Breast epithelium (tissue), 4 donors: ENCODE measurements at regions of chr20 and their contacts with region 1.

Region 1: GRCh38 chr20:62782149-62782892 is 14.0 kb upstream of the MRGBP start:
- DNase-seq: no peak
- H3K4me3 ChIP-seq: no peak overlapping the region
- H3K27ac ChIP-seq: no peak overlapping the region
- H3K4me1 ChIP-seq: no peaks in the 10 kb centered on the region
- H3K27me3 ChIP-seq: peaks cover 0 to 24% of the 10 kb centered on the region in 2 donors
- CTCF ChIP-seq: no peak
- POLR2A ChIP-seq: no peak

Region 2: DNA sequence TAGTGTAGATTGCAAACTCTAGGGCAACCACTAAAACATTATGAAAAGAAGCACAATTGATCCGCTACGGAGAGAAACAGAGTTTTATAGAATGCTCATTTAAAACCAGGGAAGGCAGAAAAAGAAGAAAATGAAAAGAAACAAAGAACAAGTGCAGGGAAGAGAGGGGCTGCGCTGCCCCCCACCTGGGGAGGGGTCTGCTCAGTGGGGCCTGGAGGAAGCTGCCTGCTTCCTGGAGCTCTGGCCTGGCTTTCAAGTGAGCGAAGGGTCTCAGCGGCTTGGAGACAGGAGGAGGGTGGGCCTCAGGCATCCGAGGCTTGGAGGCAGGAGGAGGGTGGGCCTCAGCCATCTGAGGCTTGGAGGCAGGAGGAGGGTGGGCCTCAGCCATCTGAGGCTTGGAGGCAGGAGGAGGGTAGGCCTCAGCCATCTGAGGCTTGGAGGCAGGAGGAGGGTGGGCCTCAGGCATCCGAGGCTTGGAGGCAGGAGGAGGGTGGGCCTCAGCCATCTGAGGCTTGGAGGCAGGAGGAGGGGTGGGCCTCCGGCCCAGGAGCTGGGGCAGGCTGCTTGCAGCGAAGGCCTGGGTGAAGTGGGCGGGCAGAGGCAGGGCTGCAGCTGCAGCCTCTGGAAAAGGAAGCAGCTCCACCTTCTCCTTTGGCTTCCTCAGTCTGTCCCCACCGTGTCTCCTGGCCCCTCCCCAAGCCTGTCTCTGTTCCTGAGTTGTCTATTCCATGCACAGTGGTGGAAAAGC is 1122.9 kb before region 1 on chr20:
- intact Hi-C with region 1: no loop called
- DNase-seq: no peak
- H3K4me3 ChIP-seq: no peak overlapping the region
- H3K27ac ChIP-seq: no peak overlapping the region
- H3K4me1 ChIP-seq: no peaks in the 10 kb centered on the region
- H3K27me3 ChIP-seq: no peaks in the 10 kb centered on the region
- CTCF ChIP-seq: no peak
- POLR2A ChIP-seq: no peak

Region 3: GRCh38 chr20:62500237-62500864 is 282.0 kb before region 1 on chr20:
- intact Hi-C with region 1: loop called (anchors 10 kb)
- DNase-seq: peak; percentile 39 to 77
- H3K4me3 ChIP-seq: peak overlapping the region in 1 of 3 donors; percentile 12
- H3K27ac ChIP-seq: no peak overlapping the region
- H3K4me1 ChIP-seq: no peaks in the 10 kb centered on the region
- H3K27me3 ChIP-seq: peaks cover 0 to 22% of the 10 kb centered on the region in 2 donors
- CTCF ChIP-seq: peak; percentile 71 to 93 (median 91)
- POLR2A ChIP-seq: no peak

Region 4: DNA sequence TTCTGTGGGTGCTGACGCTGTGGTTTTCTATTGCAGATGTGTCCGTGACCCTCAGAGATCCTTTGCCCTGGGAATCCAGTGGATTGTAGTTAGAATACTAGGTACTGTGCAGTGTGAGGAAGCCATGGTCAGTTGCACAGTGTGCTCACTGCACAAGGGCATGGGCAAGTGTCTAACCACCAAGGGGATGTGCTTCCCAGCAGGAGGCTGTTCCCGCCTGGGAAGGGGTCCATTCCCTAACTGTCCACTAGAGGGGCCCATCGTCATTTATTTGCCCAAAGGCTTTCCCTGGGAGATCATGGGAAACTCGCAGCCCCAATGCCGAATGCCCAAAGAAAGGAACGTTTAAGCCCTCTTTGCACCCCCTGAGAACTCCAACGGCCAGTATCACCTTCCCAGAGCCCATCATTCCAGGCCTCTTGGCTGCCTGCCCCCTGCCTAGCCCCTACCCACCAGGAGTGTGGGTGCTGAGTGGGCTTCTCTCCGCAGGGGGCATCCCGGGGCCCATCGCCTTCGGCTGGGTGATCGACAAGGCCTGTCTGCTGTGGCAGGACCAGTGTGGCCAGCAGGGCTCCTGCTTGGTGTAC is 113.8 kb before region 1 on chr20:
- intact Hi-C with region 1: loop called (anchors 10 kb)
- DNase-seq: peak; percentile 57 to 64
- H3K4me3 ChIP-seq: no peak overlapping the region
- H3K27ac ChIP-seq: no peak overlapping the region
- H3K4me1 ChIP-seq: peaks cover 0 to 9% of the 10 kb centered on the region in 2 donors
- H3K27me3 ChIP-seq: peaks cover 0 to 5% of the 10 kb centered on the region in 2 donors
- CTCF ChIP-seq: peak; percentile 76 to 85 (median 80)
- POLR2A ChIP-seq: no peak

Region 5: DNA sequence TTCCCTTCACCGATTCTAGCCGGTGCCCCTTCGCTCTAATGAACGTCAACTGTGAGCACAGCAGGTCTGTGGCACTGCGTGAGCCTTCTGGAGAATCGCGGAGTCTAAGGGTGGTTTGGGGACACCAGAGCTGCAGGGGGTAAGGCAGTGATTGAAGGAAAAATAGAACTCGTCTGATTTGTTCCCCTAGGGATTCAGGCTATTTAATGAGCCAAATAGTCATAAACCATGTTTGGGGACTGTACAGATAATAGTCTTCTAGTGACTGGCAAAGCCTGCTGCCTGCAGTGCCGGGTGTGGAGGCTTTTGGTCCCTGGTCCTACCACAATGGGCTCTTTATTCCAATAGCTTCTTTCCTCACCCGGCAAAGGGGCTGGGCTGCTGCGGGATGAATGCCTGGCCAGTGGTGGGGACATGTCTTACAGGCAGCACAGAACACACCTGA is 84.8 kb before region 1 on chr20:
- intact Hi-C with region 1: loop called (anchors 10 kb)
- DNase-seq: peak in 1 of 2 donors; percentile 26
- H3K4me3 ChIP-seq: no peak overlapping the region
- H3K27ac ChIP-seq: no peak overlapping the region
- H3K4me1 ChIP-seq: no peaks in the 10 kb centered on the region
- H3K27me3 ChIP-seq: peaks cover 0 to 21% of the 10 kb centered on the region in 2 donors
- CTCF ChIP-seq: no peak
- POLR2A ChIP-seq: no peak

Region 6: DNA sequence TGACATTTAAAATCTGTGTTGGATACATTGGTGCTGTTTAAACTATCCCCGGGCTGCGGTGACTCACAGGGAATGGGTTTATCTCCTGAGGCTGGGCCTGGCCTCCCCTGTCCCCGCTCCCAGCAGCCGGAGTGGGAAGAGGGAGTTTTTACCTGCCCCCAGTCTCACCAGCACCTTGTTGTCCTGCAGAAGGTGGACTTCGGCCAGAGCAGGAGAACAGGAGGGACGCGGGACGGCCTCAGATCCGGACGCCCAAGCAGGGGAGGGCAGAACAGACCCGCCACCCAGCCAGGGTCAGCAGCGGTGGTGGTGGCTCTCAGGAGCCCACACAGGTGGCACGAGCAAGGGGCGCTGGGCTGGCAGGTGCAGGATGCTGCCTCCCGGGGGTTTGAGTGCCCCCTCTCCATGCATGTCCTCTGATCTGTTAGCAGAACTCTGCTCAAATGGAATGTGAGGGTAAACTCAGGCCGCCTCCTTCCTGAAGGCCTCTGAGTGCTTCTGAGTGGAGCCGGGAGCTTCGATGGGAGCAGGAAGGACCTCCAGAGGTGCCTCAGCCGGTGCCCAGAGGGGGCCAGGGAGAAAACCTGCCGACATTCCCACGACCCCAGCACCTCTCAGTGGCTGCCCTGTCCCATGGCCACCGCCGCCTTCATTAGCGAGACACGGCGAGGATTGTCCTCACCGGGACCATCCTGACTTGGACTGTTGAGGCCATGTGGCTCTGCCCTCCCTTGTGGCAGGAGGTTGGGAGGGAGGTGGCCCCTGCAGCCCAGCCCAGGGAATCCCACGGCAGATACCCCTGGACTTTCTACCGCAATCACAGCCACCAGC is 29.4 kb before region 1 on chr20:
- intact Hi-C with region 1: no loop called
- DNase-seq: no peak
- H3K4me3 ChIP-seq: no peak overlapping the region
- H3K27ac ChIP-seq: no peak overlapping the region
- H3K4me1 ChIP-seq: no peaks in the 10 kb centered on the region
- H3K27me3 ChIP-seq: no peaks in the 10 kb centered on the region
- CTCF ChIP-seq: no peak
- POLR2A ChIP-seq: no peak